HCT116 (cell line): ENCODE measurements at regions of chr16 and their contacts with region 1.

Region 1: DNA sequence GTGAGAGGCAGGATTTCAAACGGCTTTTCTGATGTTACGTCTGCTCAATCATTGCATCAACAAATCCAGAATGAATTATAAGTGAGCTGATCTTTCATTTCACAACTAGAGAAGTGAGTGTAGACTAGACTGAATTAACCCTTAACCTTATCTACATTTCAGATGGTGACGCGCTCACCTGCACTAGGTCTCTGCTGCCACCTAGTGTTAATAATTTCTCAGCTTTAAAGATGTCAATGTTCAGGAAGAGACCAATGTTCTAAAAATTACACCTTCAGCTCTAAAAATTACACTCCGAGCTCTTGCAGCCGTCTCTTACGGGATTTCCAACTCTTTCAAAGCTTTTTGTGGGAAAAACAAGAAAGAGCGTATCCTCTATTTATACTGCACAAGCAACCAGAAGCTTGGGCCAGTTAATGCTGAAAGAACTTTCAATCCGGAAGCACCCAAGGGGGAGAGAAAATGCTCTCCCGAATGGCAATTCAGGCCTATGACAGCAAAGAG is 88.2 kb upstream of the FA2H start:
- DNase-seq: peak; percentile 46
- ATAC-seq: peak; percentile 93
- H3K4me3 ChIP-seq: no peak overlapping the region
- H3K27ac ChIP-seq: no peak overlapping the region
- H3K4me1 ChIP-seq: peaks cover 1 to 7% of the 10 kb centered on the region in 2 experiments; a peak in 2 of 4 replicates
- H3K27me3 ChIP-seq: no peaks in the 10 kb centered on the region
- CTCF ChIP-seq: peak; percentile 69 to 94 (median 93)
- POLR2A ChIP-seq: no peak
- RAD21 ChIP-seq: peak; percentile 97

Region 2: GRCh38 chr16:74304164-74304834 is 558.5 kb before region 1 on chr16:
- CTCF ChIA-PET with region 1: interaction called, 13 read pairs
- POLR2A ChIA-PET with region 1: no interaction called
- RAD21 ChIA-PET with region 1: no interaction called
- intact Hi-C with region 1: loop called (anchors 5 kb)
- DNase-seq: no peak
- ATAC-seq: peak; percentile 64
- H3K4me3 ChIP-seq: no peak overlapping the region
- H3K27ac ChIP-seq: no peak overlapping the region
- H3K4me1 ChIP-seq: no peaks in the 10 kb centered on the region
- H3K27me3 ChIP-seq: no peaks in the 10 kb centered on the region
- CTCF ChIP-seq: peak in 2 of 3 experiments; percentile 48 to 52; a peak in 4 of 6 replicates
- POLR2A ChIP-seq: no peak
- RAD21 ChIP-seq: peak; percentile 28; the same call in 1 of the 2 replicates

Region 3: DNA sequence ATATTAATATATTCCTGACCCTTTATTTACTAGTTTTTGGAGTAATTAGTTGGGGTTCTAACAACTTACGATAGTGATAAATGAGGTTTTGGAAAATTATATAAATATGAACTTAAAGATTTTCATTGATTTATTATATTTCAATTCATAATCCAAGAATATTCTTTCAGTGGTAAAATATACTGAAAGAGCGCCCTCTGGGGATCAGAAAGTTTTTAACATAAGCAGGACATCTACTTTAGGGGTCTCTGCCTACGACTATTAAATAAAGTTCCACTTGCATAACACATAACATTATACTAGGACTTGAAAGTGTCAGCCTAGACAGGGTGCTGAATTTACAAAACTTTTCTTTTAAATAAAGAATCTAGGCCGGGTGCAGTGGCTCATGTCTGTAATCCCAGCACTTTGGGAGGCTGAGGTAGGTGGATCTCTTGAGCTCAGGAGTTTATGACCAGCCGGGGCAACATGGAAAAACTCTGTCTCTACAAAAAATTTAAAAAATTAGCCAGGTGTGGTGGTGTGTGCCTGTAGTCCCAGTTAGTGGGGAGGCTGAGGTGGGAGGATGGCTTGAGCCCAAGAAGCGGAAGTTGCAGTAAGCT is 211.7 kb before region 1 on chr16:
- CTCF ChIA-PET with region 1: interaction called, 11 read pairs
- POLR2A ChIA-PET with region 1: no interaction called
- RAD21 ChIA-PET with region 1: no interaction called
- intact Hi-C with region 1: no loop called
- DNase-seq: peak; percentile 2
- ATAC-seq: no peak
- H3K4me3 ChIP-seq: no peak overlapping the region
- H3K27ac ChIP-seq: no peak overlapping the region
- H3K4me1 ChIP-seq: peaks cover 2 to 7% of the 10 kb centered on the region in 2 experiments; a peak in 3 of 4 replicates
- H3K27me3 ChIP-seq: no peaks in the 10 kb centered on the region
- CTCF ChIP-seq: peak; percentile 21 to 54 (median 46); a peak in 5 of 6 replicates
- POLR2A ChIP-seq: no peak
- RAD21 ChIP-seq: peak; percentile 45; the same call in 1 of the 2 replicates

Region 4: DNA sequence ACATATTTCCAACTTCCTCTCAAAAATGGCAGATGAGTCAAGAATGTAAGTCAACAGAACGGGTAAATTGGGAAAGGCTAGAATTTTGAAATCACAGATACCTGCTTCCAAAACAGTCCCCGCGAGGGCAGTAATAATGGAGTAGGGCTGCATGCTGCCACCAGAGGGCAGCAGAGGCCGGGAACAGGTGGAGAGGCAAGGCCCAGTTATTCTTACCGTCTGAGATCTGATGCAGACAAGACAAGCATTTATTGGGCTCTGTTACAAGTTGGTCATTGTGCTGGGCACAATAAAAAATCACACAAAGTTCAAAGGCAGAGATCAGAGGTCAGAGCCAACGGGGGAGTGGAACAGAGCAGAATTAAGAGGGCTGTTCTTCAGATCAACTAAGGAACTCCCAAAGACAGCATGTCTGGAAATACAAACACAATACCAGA is 153.3 kb before region 1 on chr16:
- CTCF ChIA-PET with region 1: interaction called, 38 read pairs
- POLR2A ChIA-PET with region 1: no interaction called
- RAD21 ChIA-PET with region 1: interaction called, 3 to 6 read pairs
- intact Hi-C with region 1: loop called (anchors 1 kb)
- DNase-seq: peak; percentile 58
- ATAC-seq: peak; percentile 98
- H3K4me3 ChIP-seq: no peak overlapping the region
- H3K27ac ChIP-seq: no peak overlapping the region
- H3K4me1 ChIP-seq: peaks cover 0 to 7% of the 10 kb centered on the region in 2 experiments; a peak in 1 of 4 replicates
- H3K27me3 ChIP-seq: no peaks in the 10 kb centered on the region
- CTCF ChIP-seq: peak; percentile 97 to 99 (median 98)
- POLR2A ChIP-seq: no peak
- RAD21 ChIP-seq: peak; percentile 99

Region 5: DNA sequence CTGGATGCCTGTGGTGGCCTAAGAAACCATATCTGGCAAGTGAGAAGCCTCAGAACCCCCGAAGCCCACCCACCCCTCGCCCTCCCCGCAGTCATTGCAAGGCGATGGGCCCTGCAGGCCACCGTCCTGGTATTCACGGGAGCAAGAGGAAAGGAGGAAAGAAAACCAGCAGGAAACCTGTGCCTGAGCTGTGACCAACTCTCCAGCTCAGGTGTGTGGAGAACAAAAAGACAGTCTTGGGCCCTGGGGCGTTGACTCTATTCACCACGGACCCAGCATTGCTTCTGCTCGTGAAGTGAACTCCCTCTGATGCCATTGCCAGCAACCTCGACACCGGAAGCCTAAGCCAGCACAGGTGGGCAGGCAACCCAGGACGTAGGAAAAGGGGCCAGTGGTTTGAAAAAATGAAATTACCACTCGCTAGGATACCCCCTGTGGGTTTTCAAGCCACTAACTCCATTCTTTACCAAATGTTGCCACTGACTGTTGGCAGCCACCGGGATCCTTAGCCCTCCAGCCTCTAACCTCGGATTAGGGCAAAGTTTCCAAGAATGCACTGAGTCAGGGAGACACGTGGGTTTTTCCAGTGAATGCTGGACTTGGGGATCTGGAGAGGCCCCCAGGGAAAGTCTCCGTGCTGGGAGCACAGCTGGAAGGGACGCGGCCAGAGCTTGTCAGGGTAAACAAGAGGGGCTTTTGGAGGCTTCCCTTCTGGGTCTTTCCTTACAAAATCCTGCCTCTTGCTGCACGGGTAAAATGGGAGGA is 113.3 kb before region 1 on chr16:
- CTCF ChIA-PET with region 1: no interaction called
- POLR2A ChIA-PET with region 1: no interaction called
- RAD21 ChIA-PET with region 1: no interaction called
- intact Hi-C with region 1: no loop called
- DNase-seq: no peak
- ATAC-seq: no peak; the same call in 1 of the 2 replicates
- H3K4me3 ChIP-seq: no peak overlapping the region
- H3K27ac ChIP-seq: no peak overlapping the region
- H3K4me1 ChIP-seq: peaks cover 2 to 16% of the 10 kb centered on the region in 2 experiments; a peak in 3 of 4 replicates
- H3K27me3 ChIP-seq: no peaks in the 10 kb centered on the region
- CTCF ChIP-seq: no peak
- POLR2A ChIP-seq: no peak
- RAD21 ChIP-seq: no peak

Region 6: DNA sequence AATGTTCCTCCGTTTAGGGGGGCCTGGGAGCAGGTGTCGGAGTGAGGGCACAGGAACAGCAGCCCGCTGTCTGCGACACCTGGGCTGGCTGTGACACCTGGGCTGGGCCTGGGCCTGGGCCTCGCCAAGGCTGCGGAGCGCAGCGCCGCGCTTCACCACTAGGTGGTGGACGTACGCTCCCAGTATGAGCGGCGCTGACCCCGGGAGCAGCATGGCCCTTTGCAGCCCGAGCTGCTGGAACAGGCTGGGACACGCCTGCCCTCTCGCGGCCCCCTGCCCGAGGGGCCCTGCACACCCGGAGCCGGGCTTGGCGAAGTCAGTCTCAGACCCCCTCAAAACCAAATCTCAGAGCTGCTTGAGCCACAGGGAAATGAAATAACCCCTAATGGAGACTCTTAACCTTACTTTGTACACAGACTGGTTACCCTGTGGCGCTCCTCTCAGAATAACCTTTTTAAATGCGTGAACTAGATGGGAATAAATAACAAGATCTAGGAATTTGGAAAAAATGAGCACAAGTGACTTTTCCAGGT is 49.6 kb before region 1 on chr16:
- CTCF ChIA-PET with region 1: interaction called, 19 read pairs
- POLR2A ChIA-PET with region 1: no interaction called
- RAD21 ChIA-PET with region 1: interaction called, 3 to 5 read pairs
- intact Hi-C with region 1: loop called (anchors 1 kb)
- DNase-seq: peak; percentile 76
- ATAC-seq: peak; percentile 100
- H3K4me3 ChIP-seq: 0 out of 4 replicates have a peak overlapping the region, but pooled peaks of 1 of the 2 experiments have one; percentile 15
- H3K27ac ChIP-seq: no peak overlapping the region
- H3K4me1 ChIP-seq: peaks cover 0 to 10% of the 10 kb centered on the region in 2 experiments; a peak in 2 of 4 replicates
- H3K27me3 ChIP-seq: no peaks in the 10 kb centered on the region
- CTCF ChIP-seq: peak; percentile 92 to 99 (median 98)
- POLR2A ChIP-seq: no peak
- RAD21 ChIP-seq: peak; percentile 95

Region 7: GRCh38 chr16:74874912-74875546 is 12.2 kb after region 1 on chr16:
- CTCF ChIA-PET with region 1: interaction called, 17 read pairs
- POLR2A ChIA-PET with region 1: no interaction called
- RAD21 ChIA-PET with region 1: no interaction called
- intact Hi-C with region 1: no loop called
- DNase-seq: no peak
- ATAC-seq: peak; percentile 27; the same call in 1 of the 2 replicates
- H3K4me3 ChIP-seq: no peak overlapping the region
- H3K27ac ChIP-seq: no peak overlapping the region
- H3K4me1 ChIP-seq: peaks cover 0 to 7% of the 10 kb centered on the region in 2 experiments; a peak in 1 of 4 replicates
- H3K27me3 ChIP-seq: no peaks in the 10 kb centered on the region
- CTCF ChIP-seq: no peak
- POLR2A ChIP-seq: no peak
- RAD21 ChIP-seq: peak; percentile 31; the same call in 1 of the 2 replicates